ENCODE measurements at regions of chr15 and their contacts with region 1.

Region 1: GRCh38 chr15:30073915-30074314 is 8.8 kb upstream of the GOLGA8J start:
- DNase-seq: no peak
- ATAC-seq: no peak
- H3K4me3 Mint-ChIP-seq: no peak overlapping the region
- H3K27ac Mint-ChIP-seq: no peak overlapping the region
- H3K4me1 Mint-ChIP-seq: peaks cover 5% of the 10 kb centered on the region
- H3K27me3 Mint-ChIP-seq: no peaks in the 10 kb centered on the region
- CTCF ChIP-seq: no peak

Region 2: GRCh38 chr15:29913528-29914135 is 160.3 kb before region 1 on chr15:
- CTCF ChIA-PET with region 1: no interaction called
- POLR2A ChIA-PET with region 1: no interaction called
- DNase-seq: no peak
- ATAC-seq: no peak
- H3K4me3 Mint-ChIP-seq: no peak overlapping the region
- H3K27ac Mint-ChIP-seq: 0 out of 2 replicates have a peak overlapping the region, but pooled peaks have one; percentile 46
- H3K4me1 Mint-ChIP-seq: peaks cover 23% of the 10 kb centered on the region
- H3K27me3 Mint-ChIP-seq: no peaks in the 10 kb centered on the region
- CTCF ChIP-seq: no peak

Region 3: GRCh38 chr15:29942143-29942542 is 131.8 kb before region 1 on chr15:
- CTCF ChIA-PET with region 1: interaction called, 20 read pairs
- POLR2A ChIA-PET with region 1: interaction called, 3 read pairs
- DNase-seq: no peak
- ATAC-seq: peak; percentile 30; the same call in 1 of the 2 replicates
- H3K4me3 Mint-ChIP-seq: no peak overlapping the region
- H3K27ac Mint-ChIP-seq: no peak overlapping the region
- H3K4me1 Mint-ChIP-seq: no peaks in the 10 kb centered on the region
- H3K27me3 Mint-ChIP-seq: no peaks in the 10 kb centered on the region
- CTCF ChIP-seq: no peak

Region 4: DNA sequence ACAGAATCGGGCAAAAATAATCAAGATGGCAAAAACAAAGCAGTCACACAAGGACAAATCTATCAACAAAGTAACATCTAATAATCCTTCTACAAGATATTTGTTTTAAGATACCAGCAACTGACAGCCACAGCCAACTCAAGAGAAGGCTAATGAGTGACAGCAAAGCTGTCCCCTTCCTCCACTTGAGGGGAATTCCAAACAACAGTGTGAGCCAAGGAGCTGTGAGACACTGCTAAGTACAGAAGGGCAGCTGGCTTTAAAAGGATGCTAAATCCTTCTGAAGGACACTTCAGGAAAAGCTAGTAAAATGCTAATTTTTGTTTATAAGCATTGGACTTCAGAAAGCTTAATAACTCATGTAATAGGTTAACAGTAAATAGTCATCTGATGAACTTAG is 111.5 kb before region 1 on chr15:
- CTCF ChIA-PET with region 1: interaction called, 10 read pairs
- POLR2A ChIA-PET with region 1: no interaction called
- DNase-seq: no peak
- ATAC-seq: no peak
- H3K4me3 Mint-ChIP-seq: no peak overlapping the region
- H3K27ac Mint-ChIP-seq: peak overlapping the region; percentile 28
- H3K4me1 Mint-ChIP-seq: peaks cover 9% of the 10 kb centered on the region
- H3K27me3 Mint-ChIP-seq: peaks cover 19% of the 10 kb centered on the region
- CTCF ChIP-seq: no peak

Region 5: DNA sequence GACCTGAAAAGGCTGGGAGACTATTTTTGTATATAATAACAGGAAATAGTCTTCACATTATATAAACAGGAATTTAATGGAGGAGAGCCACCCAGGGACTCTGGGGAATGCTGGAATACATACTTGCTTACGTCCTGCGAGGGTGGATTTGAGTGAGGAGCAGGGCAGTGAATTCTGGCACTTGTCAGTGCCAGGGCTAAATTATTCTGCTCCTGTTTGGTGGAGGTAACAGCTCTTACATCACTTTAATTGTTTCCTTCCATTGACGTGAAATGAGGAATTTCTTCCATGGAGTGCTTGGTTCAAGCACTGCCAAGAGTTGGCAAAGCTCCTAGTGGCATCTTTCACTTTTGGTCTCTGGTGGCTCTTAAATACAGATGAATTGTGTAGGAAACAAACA is 85.2 kb before region 1 on chr15:
- CTCF ChIA-PET with region 1: interaction called, 20 read pairs
- POLR2A ChIA-PET with region 1: no interaction called
- DNase-seq: no peak
- ATAC-seq: no peak
- H3K4me3 Mint-ChIP-seq: no peak overlapping the region
- H3K27ac Mint-ChIP-seq: 0 out of 2 replicates have a peak overlapping the region, but pooled peaks have one; percentile 13
- H3K4me1 Mint-ChIP-seq: peaks cover 47% of the 10 kb centered on the region
- H3K27me3 Mint-ChIP-seq: no peaks in the 10 kb centered on the region
- CTCF ChIP-seq: no peak